Endothelial cell of umbilical vein (primary cell): ENCODE measurements at regions of chr9 and their contacts with region 1.

Region 1: GRCh38 chr9:134698587-134699342 is 57.2 kb downstream of the COL5A1 start:
- DNase-seq: peak; percentile 52
- H3K4me3 ChIP-seq: no peak overlapping the region
- H3K27ac ChIP-seq: no peak overlapping the region
- H3K4me1 ChIP-seq: no peaks in the 10 kb centered on the region
- H3K27me3 ChIP-seq: no peaks in the 10 kb centered on the region
- CTCF ChIP-seq: peak; percentile 79 to 91
- POLR2A ChIP-seq: no peak

Region 2: DNA sequence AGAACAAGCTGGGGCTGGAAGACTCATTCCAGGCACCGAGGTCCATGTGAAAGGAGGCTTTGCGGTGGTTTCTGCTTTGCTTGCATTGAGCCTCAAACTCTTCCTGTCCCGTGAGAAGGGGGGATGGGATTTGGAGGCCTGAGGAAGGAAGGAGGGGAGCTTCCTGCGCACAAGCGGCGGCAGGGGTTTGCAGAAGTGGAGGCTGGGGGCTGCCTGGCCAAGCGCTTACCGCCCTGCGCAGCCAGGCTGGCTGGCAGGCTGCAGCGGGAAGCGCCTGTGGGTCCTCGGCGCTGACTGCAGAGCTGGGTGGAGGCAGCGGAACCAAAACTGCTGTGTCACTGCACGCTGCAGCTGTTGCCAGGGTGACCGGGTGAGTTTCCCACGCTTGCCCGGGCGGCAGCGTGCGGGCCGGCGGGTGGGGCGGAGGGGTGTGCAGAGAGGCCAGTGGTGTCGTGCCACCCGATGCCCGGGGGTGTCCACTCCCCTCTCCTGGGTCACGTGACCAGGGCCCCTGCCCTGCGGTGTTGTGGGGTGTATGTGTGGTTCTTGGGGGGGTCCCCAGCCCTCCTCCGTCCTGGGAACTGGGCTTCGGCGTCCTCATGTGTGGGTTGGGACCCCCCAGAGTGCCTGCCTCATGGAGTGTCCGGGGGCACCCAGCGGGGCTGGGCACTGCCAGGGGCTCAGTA is 291.5 kb before region 1 on chr9:
- CTCF ChIA-PET with region 1: no interaction called
- POLR2A ChIA-PET with region 1: no interaction called
- dilution Hi-C with region 1: no loop called
- intact Hi-C with region 1: no loop called
- DNase-seq: peak; percentile 94
- H3K4me3 ChIP-seq: no peak overlapping the region
- H3K27ac ChIP-seq: peak overlapping the region; percentile 94
- H3K4me1 ChIP-seq: peaks cover 47% of the 10 kb centered on the region
- H3K27me3 ChIP-seq: no peaks in the 10 kb centered on the region
- CTCF ChIP-seq: no peak
- POLR2A ChIP-seq: no peak

Region 3: GRCh38 chr9:134738869-134739659 is 40.3 kb after region 1 on chr9:
- CTCF ChIA-PET with region 1: interaction called, 17 read pairs
- POLR2A ChIA-PET with region 1: no interaction called
- dilution Hi-C with region 1: no loop called
- intact Hi-C with region 1: loop called (anchors 1 kb)
- DNase-seq: peak; percentile 43
- H3K4me3 ChIP-seq: no peak overlapping the region
- H3K27ac ChIP-seq: no peak overlapping the region
- H3K4me1 ChIP-seq: no peaks in the 10 kb centered on the region
- H3K27me3 ChIP-seq: no peaks in the 10 kb centered on the region
- CTCF ChIP-seq: peak; percentile 71 to 87
- POLR2A ChIP-seq: no peak

Region 4: GRCh38 chr9:134983074-134983473 is 284.3 kb after region 1 on chr9:
- CTCF ChIA-PET with region 1: interaction called, 3 read pairs
- POLR2A ChIA-PET with region 1: no interaction called
- dilution Hi-C with region 1: no loop called
- intact Hi-C with region 1: loop called (anchors 2 kb)
- DNase-seq: peak; percentile 4
- H3K4me3 ChIP-seq: no peak overlapping the region
- H3K27ac ChIP-seq: no peak overlapping the region
- H3K4me1 ChIP-seq: no peaks in the 10 kb centered on the region
- H3K27me3 ChIP-seq: no peaks in the 10 kb centered on the region
- CTCF ChIP-seq: peak; percentile 13 to 33
- POLR2A ChIP-seq: no peak